ENCODE measurements at regions of chr10 and their contacts with region 1.

Region 1: GRCh38 chr10:112738606-112739591 is 211.1 kb upstream of the TCF7L2 start:
- DNase-seq: no peak
- H3K4me3 ChIP-seq: no peak overlapping the region
- H3K27ac ChIP-seq: no peak overlapping the region; the same call in 1 of the 2 replicates
- H3K4me1 ChIP-seq: peaks cover 0 to 7% (median 3%) of the 10 kb centered on the region in 4 experiments; a peak in 5 of 7 replicates
- H3K27me3 ChIP-seq: no peaks in the 10 kb centered on the region
- CTCF ChIP-seq: no peak
- EP300 ChIP-seq: no peak
- POLR2A ChIP-seq: no peak
- RAD21 ChIP-seq: no peak

Region 2: DNA sequence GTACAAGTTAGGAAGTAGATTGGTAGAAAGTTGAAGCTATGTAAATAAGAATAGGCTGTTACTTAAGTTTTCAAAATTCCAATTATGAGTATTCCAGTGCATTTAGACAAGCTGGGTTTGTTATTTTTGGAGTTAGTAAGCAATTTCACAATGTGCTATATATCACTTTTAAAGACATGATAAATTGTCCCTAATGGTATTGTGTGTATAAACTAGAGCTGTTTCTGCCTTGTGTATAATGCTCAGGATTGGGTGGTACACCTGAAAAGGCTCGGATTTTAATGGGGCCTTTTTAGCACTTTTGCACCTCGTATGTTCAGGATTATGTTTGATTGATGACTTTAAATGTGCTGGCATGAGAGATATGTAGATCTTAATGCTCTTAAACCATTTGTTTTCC is 116.1 kb before region 1 on chr10:
- CTCF ChIA-PET with region 1: no interaction called
- POLR2A ChIA-PET with region 1: no interaction called
- DNase-seq: no peak
- H3K4me3 ChIP-seq: no peak overlapping the region
- H3K27ac ChIP-seq: no peak overlapping the region
- H3K4me1 ChIP-seq: peaks cover 0 to 4% (median 0%) of the 10 kb centered on the region in 4 experiments; a peak in 2 of 7 replicates
- H3K27me3 ChIP-seq: no peaks in the 10 kb centered on the region
- CTCF ChIP-seq: no peak
- EP300 ChIP-seq: no peak
- POLR2A ChIP-seq: no peak
- RAD21 ChIP-seq: no peak

Region 3: GRCh38 chr10:112753961-112754411 is 15.1 kb after region 1 on chr10:
- CTCF ChIA-PET with region 1: interaction called, 3 read pairs
- POLR2A ChIA-PET with region 1: interaction called, 11 read pairs
- DNase-seq: no peak
- H3K4me3 ChIP-seq: no peak overlapping the region
- H3K27ac ChIP-seq: no peak overlapping the region
- H3K4me1 ChIP-seq: no peaks in the 10 kb centered on the region; a peak in 1 of 7 replicates
- H3K27me3 ChIP-seq: no peaks in the 10 kb centered on the region
- CTCF ChIP-seq: no peak
- EP300 ChIP-seq: no peak
- POLR2A ChIP-seq: no peak
- RAD21 ChIP-seq: no peak

Region 4: GRCh38 chr10:112827951-112828350 is 89.1 kb after region 1 on chr10:
- CTCF ChIA-PET with region 1: no interaction called
- POLR2A ChIA-PET with region 1: no interaction called
- DNase-seq: no peak
- H3K4me3 ChIP-seq: no peak overlapping the region
- H3K27ac ChIP-seq: no peak overlapping the region
- H3K4me1 ChIP-seq: peaks cover 8 to 21% (median 15%) of the 10 kb centered on the region in 4 experiments
- H3K27me3 ChIP-seq: no peaks in the 10 kb centered on the region; a peak in 1 of 7 replicates
- CTCF ChIP-seq: no peak
- EP300 ChIP-seq: no peak
- POLR2A ChIP-seq: no peak
- RAD21 ChIP-seq: no peak

Measured in H1 (cell line).